ENCODE measurements at regions of chr1 and their contacts with region 1.

Region 1: DNA sequence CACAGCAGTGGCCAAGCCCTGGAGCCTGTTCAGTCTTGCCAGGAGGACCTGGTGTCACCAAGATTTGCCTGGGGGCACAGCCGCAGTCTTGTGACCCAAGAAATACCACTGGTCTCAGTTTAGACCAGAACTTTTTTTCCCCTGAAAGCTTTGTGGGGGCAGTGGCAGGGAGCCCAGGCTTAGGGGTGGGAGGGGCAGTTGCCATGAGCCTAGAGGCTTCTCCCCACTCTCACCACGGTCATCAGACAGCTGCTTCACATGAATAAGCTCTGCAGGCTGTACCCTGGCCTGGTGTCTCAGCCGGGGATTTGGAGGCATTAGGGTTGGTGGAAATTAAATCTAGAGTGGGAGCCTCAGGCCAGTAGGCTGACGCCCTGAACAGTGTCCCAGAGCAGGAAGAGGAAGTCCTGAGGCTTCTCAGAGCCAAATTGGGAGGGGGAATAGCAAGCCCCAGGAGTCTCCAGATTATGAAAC is 73.7 kb downstream of the SLC16A1 start:
- DNase-seq: no peak
- H3K4me3 ChIP-seq: no peak overlapping the region
- H3K27ac ChIP-seq: peak overlapping the region in 1 of 2 experiments; percentile 22
- H3K4me1 ChIP-seq: peaks cover 0 to 10% (median 0%) of the 10 kb centered on the region in 4 experiments
- H3K27me3 ChIP-seq: peaks cover 0 to 14% (median 2%) of the 10 kb centered on the region in 5 experiments

Region 2: DNA sequence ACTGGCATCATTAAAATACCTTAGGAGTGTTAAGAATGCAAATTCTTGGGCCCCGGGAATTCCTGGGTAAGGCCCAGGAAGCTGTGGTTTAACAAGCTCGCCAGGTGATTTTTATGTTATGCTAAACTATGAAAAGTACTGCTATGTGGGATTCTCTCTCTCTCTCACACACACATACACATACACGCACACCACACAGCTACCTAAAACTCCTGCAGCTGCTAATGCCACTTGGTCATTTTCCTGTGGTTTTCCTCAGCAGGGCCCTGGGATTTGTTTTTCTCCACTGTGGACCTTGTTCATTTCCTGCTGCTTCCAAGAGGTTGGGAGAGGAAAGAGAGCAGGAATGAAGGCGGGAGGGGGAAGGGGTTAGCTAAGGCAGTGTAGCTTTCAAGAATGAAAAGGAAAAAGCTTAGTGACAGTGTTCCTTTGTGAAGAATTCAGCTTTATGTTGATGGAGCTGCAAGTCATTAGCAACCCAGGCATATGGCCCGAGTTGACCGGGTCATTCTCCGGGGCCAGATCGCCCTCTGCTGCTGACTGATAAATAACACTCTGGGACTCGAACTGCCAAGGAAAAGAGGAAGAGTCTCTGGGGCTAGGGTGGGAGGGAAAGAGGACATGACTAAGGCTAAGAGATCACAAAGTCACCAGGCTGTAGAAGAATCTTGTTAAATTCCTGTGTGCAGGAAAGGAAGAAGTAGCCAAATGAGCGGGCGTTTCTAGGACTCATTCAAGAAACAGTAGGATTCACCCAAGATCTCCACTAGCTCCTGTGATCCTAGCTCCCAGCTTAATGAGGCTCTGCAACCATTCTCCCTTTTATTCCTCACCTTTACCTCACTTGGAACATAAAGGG is 160.2 kb after region 1 on chr1:
- CTCF ChIA-PET with region 1: interaction called, 51 read pairs
- POLR2A ChIA-PET with region 1: no interaction called
- DNase-seq: peak; percentile 80 to 85 (median 84)
- H3K4me3 ChIP-seq: peak overlapping the region in 1 of 7 experiments; percentile 11
- H3K27ac ChIP-seq: no peak overlapping the region
- H3K4me1 ChIP-seq: peaks cover 9 to 33% (median 16%) of the 10 kb centered on the region in 4 experiments
- H3K27me3 ChIP-seq: no peaks in the 10 kb centered on the region